ENCODE measurements at regions of chr4 and their contacts with region 1.

Region 1: DNA sequence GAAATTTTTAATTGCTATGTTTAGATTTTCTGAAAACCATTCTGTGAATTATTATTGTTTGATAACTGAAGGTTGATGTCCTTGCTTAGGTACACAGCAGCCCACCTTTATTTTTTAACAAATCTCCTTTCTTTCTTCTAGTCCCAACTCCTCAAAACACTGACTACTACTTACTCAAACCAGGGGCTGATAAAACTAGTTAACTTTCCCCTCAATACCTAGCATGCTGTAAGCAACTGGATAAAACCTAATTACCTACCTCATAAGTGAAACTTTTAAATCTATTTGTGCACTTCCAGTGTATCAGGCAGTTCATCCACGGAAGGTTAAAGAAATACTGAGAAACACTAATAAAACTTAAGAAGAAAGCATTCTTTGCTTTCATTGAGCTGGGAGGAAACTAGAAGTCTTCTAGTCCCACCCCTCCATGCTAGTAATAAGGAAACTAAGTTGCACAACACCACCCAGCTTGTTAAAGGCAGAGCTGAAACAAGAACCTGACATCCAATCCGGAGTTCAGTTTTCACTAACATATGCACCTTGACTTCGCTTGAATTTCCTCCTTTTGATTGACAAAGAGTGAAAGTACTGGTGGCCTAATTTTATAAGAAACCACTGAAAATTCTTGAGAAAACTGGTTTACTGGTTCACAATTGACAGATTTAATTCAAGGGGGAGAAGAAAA is 180.2 kb upstream of the TET2 start:
- DNase-seq: peak in 5 of 9 donors; percentile 1 to 13 (median 4)
- ATAC-seq: peak; percentile 93
- H3K4me3 ChIP-seq: no peak overlapping the region
- H3K4me3 Mint-ChIP-seq: peak overlapping the region in 8 of 10 donors; percentile 46 to 83 (median 54)
- H3K27ac ChIP-seq: no peak overlapping the region
- H3K27ac Mint-ChIP-seq: peak overlapping the region in 8 of 9 donors; percentile 5 to 89 (median 66)
- H3K4me1 ChIP-seq: peaks cover 0 to 7% of the 10 kb centered on the region in 2 donors
- H3K4me1 Mint-ChIP-seq: peaks cover 4 to 11% (median 9%) of the 10 kb centered on the region in 7 donors
- H3K27me3 ChIP-seq: no peaks in the 10 kb centered on the region
- H3K27me3 Mint-ChIP-seq: peaks cover 2 to 14% (median 6%) of the 10 kb centered on the region in 5 donors

Region 2: GRCh38 chr4:104901438-104901837 is 65.1 kb before region 1 on chr4:
- CTCF ChIA-PET with region 1: no interaction called
- POLR2A ChIA-PET with region 1: no interaction called
- intact Hi-C with region 1: loop called in 1 of 2 experiments (anchors 10 kb)
- DNase-seq: no peak
- ATAC-seq: no peak
- H3K4me3 ChIP-seq: no peak overlapping the region
- H3K4me3 Mint-ChIP-seq: no peak overlapping the region
- H3K27ac ChIP-seq: no peak overlapping the region
- H3K27ac Mint-ChIP-seq: peak overlapping the region in 1 of 9 donors; percentile 2
- H3K4me1 ChIP-seq: no peaks in the 10 kb centered on the region
- H3K4me1 Mint-ChIP-seq: peaks cover 0 to 6% (median 0%) of the 10 kb centered on the region in 7 donors
- H3K27me3 ChIP-seq: no peaks in the 10 kb centered on the region
- H3K27me3 Mint-ChIP-seq: peaks cover 0 to 5% (median 3%) of the 10 kb centered on the region in 5 donors

Region 3: DNA sequence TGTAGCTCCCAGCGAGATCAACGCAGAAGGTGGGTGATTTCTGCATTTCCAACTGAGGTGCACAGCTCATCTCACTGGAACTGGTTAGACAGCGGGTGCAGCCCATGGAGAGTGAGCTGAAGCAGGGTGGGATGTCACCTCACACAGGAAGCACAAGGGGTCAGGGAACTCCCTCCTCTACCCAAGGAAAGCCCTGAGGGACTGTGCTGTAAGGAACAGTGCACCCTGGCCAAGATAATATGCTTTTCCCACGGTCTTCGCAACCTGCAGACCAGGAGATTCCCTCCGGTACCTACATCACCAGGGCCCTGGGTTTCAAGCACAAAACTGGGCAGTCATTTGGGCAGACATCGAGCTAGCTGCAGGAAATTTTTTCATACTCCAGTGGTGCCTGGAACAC is 36.2 kb before region 1 on chr4:
- CTCF ChIA-PET with region 1: no interaction called
- POLR2A ChIA-PET with region 1: interaction called, 3 read pairs
- intact Hi-C with region 1: loop called in 1 of 2 experiments (anchors 2 kb)
- DNase-seq: no peak
- ATAC-seq: no peak
- H3K4me3 ChIP-seq: no peak overlapping the region
- H3K4me3 Mint-ChIP-seq: peak overlapping the region in 6 of 10 donors; percentile 11 to 52 (median 22)
- H3K27ac ChIP-seq: no peak overlapping the region
- H3K27ac Mint-ChIP-seq: peak overlapping the region in 3 of 9 donors; percentile 17 to 81 (median 62)
- H3K4me1 ChIP-seq: no peaks in the 10 kb centered on the region
- H3K4me1 Mint-ChIP-seq: peaks cover 7 to 44% (median 19%) of the 10 kb centered on the region in 7 donors
- H3K27me3 ChIP-seq: no peaks in the 10 kb centered on the region
- H3K27me3 Mint-ChIP-seq: peaks cover 0 to 12% (median 0%) of the 10 kb centered on the region in 5 donors

Region 4: GRCh38 chr4:105061136-105061696 is 94.7 kb after region 1 on chr4:
- CTCF ChIA-PET with region 1: no interaction called
- POLR2A ChIA-PET with region 1: no interaction called
- intact Hi-C with region 1: loop called in 1 of 2 experiments (anchors 2 kb)
- DNase-seq: peak in 1 of 9 donors; percentile 39
- ATAC-seq: peak; percentile 49
- H3K4me3 ChIP-seq: no peak overlapping the region
- H3K4me3 Mint-ChIP-seq: peak overlapping the region in 5 of 10 donors; percentile 4 to 64 (median 34)
- H3K27ac ChIP-seq: no peak overlapping the region
- H3K27ac Mint-ChIP-seq: peak overlapping the region in 3 of 9 donors; percentile 14 to 85 (median 26)
- H3K4me1 ChIP-seq: no peaks in the 10 kb centered on the region
- H3K4me1 Mint-ChIP-seq: peaks cover 10 to 30% (median 11%) of the 10 kb centered on the region in 7 donors
- H3K27me3 ChIP-seq: no peaks in the 10 kb centered on the region
- H3K27me3 Mint-ChIP-seq: no peaks in the 10 kb centered on the region